AG04449 (cell line): ENCODE measurements at regions of chr11 and their contacts with region 1.

Region 1: DNA sequence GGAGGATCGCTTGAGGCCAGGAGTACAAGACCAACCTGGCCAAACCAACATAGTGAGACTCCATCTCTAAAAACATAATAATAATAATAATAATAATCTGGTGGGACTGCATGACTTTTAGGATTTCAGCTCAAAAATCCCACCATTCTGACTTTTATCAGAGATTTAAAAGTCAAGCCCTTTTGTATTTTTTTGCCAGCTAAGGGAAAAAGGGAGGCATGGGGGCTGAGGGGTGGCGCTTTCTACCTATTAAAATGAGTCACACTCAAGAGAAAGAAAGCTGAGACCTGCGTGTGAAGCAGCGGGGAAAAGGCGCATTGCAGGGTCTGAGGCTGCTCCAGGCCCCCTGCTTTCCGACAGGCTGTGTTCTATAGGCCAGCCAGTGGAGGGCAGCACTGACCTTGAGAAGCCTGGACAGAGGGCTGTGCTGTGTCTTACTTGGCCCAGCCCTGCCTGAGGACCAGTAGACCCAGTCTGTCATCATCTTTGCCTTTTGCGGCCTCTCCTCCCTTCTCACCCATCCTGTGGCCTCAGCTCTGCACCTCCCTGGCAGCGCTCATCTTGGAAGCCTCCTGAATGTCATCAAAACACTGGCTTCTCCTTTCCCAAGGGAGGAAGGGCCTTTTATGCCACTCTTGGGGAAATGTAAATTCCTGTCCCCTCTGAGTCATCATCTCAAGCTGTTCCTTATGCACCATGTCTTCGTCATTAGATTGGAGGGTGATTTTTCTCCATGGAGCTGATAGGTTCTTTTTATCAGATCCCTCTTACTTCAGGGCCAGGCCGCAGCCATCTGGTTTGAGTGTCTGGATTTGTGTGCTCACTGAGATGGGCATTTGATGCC is 12.7 kb upstream of the MAPK8IP1 start:
- DNase-seq: peak; percentile 72
- H3K4me3 ChIP-seq: no peak overlapping the region
- CTCF ChIP-seq: peak; percentile 87

Region 2: DNA sequence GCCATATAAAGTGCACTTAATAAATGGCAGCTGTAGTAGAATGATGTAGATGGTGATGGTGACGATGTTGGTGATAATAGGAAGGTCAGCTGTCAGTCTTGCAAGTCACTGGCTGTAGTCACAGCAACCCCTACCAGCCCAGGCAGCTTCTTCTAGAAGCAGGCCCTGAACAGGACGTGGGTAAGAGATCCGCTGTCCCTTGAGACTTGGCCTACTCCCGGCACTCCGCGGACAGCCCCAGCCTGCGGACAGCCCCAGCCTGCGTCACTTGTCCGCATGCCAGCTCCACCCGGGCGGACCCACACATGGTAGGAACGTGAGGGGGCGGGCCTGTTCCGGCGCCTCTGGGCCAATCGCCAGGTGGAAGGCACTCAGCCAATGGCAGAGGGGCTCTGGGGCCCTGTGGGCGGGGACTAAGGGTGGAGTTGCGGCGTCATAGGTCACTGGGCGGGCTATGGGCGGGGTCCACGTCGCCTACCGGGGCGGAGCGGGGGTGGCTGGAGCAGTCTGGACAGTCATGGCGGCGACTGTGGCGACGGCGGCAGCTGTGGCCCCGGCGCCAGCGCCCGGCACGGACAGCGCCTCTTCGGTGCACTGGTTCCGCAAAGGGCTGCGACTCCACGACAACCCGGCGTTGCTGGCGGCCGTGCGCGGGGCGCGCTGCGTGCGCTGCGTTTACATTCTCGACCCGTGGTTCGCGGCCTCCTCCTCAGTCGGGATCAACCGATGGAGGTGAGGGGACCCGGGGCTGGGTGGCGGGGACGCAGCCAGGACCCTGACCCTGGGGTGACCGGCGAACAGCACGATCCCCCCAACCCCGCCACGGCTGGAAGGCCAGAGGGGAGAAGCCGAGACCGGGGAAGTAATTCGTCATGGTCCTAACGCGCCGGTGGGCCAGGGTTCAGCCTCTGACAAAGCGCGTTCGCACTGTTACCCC is 25.5 kb before region 1 on chr11 and contains the start of gene CRY2:
- CTCF ChIA-PET with region 1: interaction called, 56 read pairs
- POLR2A ChIA-PET with region 1: no interaction called
- DNase-seq: peak; percentile 93
- H3K4me3 ChIP-seq: peak within 1 kb of the TSS; percentile 95
- CTCF ChIP-seq: no peak

Region 3: GRCh38 chr11:45859661-45860140 is 13.0 kb before region 1 on chr11:
- CTCF ChIA-PET with region 1: interaction called, 133 read pairs
- POLR2A ChIA-PET with region 1: interaction called, 5 read pairs
- DNase-seq: peak; percentile 99
- H3K4me3 ChIP-seq: no peak overlapping the region
- CTCF ChIP-seq: no peak

Region 4: GRCh38 chr11:45885921-45886721 is 13.4 kb after region 1 on chr11:
- CTCF ChIA-PET with region 1: interaction called, 27 read pairs
- POLR2A ChIA-PET with region 1: no interaction called
- DNase-seq: no peak
- H3K4me3 ChIP-seq: peak overlapping the region; percentile 48
- CTCF ChIP-seq: no peak

Region 5: DNA sequence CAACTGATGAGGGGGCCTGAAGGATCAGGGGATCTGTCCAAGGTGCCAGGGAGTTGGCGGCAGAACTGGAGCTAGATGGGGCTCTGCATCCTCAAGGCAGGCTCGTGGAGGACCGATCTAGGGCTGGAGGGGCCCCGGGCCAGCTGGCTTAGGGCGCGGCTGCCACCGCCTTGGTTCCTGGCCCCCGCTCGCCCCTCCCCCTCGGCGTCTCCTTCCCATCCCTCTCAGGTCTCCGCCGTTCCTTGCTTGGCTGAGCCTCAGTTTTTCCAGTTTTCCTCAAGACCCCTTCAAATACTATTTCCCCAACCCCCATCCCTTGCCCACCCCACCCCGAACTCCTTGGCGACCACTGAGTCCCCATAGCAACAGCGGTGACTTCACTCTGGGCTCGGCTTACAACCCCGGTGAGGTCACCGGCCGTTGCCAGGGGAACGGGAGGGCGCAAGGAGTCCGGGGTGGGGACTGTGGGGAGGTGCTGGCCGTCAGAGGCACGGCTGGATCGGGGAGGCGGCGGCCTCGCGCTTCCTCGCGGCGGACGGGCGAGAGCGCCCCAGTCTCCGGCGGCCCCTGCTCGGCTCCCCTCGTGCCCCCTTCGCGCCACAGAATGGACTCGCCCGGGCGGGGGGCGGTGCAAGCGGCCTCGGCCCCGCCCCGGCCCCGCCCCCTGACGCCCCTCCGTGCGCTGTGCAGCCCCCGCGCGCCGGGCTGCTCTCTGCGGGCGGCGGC is 26.9 kb after region 1 on chr11:
- CTCF ChIA-PET with region 1: interaction called, 19 read pairs
- POLR2A ChIA-PET with region 1: no interaction called
- DNase-seq: peak; percentile 16
- H3K4me3 ChIP-seq: peak overlapping the region; percentile 60
- CTCF ChIP-seq: no peak